PC-9 (cell line): ENCODE measurements at regions of chr6 and their contacts with region 1.

Region 1: DNA sequence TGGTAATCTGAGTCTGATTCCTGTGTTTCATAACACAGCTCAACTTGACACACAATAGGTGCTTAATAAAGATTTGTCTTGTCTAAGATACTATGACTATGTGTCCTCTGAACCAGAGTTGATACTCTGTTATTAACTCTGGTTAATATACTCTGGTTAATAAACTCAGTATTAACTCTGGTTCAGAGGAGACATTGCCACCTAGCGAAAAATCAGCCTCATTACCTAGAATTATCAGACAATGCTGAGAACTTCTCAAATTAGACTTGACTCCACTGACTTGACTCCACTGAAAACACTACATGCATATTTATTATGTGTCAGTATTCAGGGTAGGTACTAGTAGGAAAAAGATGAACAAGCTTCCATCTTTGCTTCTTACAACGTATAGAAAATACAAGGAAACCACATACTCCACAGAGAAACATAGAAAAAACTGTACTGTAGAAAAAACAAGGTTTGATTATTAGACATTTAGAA is 73.9 kb downstream of the AHI1 start:
- DNase-seq: peak in 1 of 2 experiments; percentile 52
- H3K4me3 ChIP-seq: no peak overlapping the region
- H3K27ac ChIP-seq: no peak overlapping the region
- H3K4me1 ChIP-seq: no peaks in the 10 kb centered on the region
- H3K27me3 ChIP-seq: no peaks in the 10 kb centered on the region
- CTCF ChIP-seq: peak; percentile 94

Region 2: GRCh38 chr6:134152767-134153485 is 1270.8 kb before region 1 on chr6:
- CTCF ChIA-PET with region 1: no interaction called
- POLR2A ChIA-PET with region 1: interaction called, 3 read pairs
- intact Hi-C with region 1: loop called (anchors 10 kb)
- DNase-seq: no peak
- H3K4me3 ChIP-seq: no peak overlapping the region
- H3K27ac ChIP-seq: no peak overlapping the region
- H3K4me1 ChIP-seq: no peaks in the 10 kb centered on the region
- H3K27me3 ChIP-seq: no peaks in the 10 kb centered on the region
- CTCF ChIP-seq: no peak

Region 3: DNA sequence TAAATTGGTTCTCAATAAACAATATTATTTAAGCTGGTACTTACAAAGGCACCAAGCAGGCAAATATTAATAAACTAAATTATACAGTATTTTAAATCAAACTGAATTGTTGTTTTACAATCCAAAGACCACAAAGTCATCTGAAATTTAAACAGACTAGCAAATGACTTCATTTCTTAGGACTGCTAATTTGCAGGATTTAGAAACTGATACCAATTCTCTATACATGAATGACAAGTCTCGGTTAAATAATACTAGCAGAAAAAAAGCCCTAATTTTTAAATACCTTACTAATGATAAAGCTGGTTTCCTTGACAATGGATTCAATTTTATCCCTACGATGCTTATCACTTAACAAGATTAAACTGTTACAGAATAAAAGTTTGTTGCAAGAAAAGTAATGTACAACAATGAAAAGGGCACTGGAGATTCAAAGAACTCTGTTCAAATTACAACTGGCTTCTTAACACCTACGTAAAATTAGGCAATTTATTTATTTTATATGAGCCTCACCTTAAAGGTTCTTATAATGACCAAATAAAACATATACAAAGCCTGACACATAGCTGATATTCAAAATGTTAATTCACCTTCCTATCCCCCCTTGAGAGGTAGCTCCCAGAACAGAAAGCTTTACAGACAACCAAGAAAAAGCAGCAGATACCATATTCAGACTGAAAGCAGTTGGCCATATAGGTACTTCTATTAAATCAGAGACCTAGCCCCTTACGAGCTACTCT is 402.2 kb before region 1 on chr6:
- CTCF ChIA-PET with region 1: no interaction called
- POLR2A ChIA-PET with region 1: no interaction called
- intact Hi-C with region 1: loop called (anchors 10 kb)
- DNase-seq: no peak
- H3K4me3 ChIP-seq: no peak overlapping the region
- H3K27ac ChIP-seq: no peak overlapping the region
- H3K4me1 ChIP-seq: no peaks in the 10 kb centered on the region
- H3K27me3 ChIP-seq: no peaks in the 10 kb centered on the region
- CTCF ChIP-seq: no peak

Region 4: GRCh38 chr6:135145063-135145800 is 278.5 kb before region 1 on chr6:
- CTCF ChIA-PET with region 1: no interaction called
- POLR2A ChIA-PET with region 1: no interaction called
- intact Hi-C with region 1: loop called (anchors 1 kb)
- DNase-seq: peak in 1 of 2 experiments; percentile 3
- H3K4me3 ChIP-seq: no peak overlapping the region
- H3K27ac ChIP-seq: no peak overlapping the region
- H3K4me1 ChIP-seq: no peaks in the 10 kb centered on the region
- H3K27me3 ChIP-seq: peaks cover 16% of the 10 kb centered on the region
- CTCF ChIP-seq: peak; percentile 94